ENCODE measurements at regions of chr4 and their contacts with region 1.

Region 1: GRCh38 chr4:121072224-121073003 is at the start of gene NDNF:
- DNase-seq: peak; percentile 70
- H3K4me3 Mint-ChIP-seq: peak within 1 kb of the TSS; percentile 77
- H3K27ac Mint-ChIP-seq: peak within 1 kb of the TSS; percentile 59
- H3K4me1 Mint-ChIP-seq: peaks cover 21% of the 10 kb centered on the region
- H3K27me3 Mint-ChIP-seq: peaks cover 44% of the 10 kb centered on the region
- total RNA-seq, gene NDNF: not detected

Region 2: DNA sequence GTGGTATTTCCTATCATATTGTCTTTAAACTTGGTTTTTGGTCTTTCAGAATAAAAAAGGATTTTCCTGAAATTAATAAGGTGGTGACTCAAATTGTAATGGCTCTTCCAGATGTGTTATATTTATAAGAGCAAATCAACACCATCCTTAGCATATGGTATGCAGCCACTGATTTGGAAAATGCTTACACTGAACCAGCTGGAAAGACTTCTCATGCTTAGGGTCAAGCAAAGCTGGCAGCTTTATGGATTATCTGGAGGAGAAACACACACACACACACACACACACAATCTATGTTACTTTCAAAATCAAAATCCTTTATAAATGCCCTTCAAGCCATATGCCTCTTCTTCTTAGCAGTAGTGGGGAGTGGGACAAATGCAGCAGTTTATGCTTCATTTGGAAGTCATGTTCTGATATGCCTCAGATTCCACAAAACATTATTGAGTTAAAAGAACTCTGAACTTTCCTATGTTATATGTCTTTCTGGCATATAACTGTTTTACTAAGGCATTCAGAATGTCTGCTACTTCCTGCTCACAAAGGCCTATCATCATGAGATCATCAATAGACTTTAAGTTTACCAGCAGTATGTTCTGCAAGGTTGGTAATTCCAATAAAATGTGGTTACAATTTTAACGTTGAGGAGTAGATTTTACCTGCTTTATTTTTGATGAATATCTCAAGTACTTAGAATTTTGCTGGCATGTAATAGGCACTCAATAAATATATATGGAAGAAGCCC is 77.0 kb before region 1 on chr4:
- CTCF ChIA-PET with region 1: no interaction called
- intact Hi-C with region 1: no loop called
- DNase-seq: no peak
- H3K4me3 Mint-ChIP-seq: no peak overlapping the region
- H3K27ac Mint-ChIP-seq: no peak overlapping the region
- H3K4me1 Mint-ChIP-seq: peaks cover 4% of the 10 kb centered on the region
- H3K27me3 Mint-ChIP-seq: no peaks in the 10 kb centered on the region

Region 3: DNA sequence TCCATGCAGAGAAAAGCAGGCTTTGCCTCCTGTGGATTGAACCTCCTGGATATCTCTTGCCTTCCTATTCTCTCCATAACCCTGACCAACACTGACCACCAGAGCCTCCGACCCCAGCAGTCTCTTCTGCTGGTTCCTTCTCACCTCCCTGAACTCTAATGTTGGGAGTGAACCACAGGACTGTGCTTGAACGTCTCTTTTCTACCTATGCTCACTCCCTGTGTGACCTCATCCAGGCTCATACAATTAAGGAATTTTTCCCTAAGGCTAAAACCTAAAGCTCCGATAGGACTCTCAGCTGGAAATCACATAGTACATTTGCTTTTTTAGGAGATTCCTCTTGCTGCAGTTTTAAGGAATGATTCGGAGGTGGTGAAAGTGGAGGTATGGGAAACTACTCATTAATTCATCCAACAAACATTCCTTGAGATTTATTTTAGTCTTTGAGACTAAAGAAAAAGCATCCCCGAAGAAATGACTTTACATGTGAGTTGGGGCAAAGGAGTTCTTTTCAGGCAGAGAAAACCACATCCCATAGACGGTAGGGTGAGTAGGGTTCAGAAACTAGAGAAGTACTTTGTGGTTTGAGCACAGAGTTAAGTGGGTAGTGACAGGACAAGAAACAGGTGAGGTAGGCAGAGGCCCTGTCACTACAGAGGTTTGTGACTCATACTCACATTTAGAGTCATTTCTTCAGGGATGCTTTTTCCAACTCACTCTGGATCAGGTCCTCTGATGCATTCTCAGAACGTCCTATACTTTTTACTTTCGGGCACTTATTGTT is 30.9 kb before region 1 on chr4:
- CTCF ChIA-PET with region 1: no interaction called
- intact Hi-C with region 1: loop called (anchors 1 kb)
- DNase-seq: peak; percentile 53
- H3K4me3 Mint-ChIP-seq: no peak overlapping the region
- H3K27ac Mint-ChIP-seq: no peak overlapping the region
- H3K4me1 Mint-ChIP-seq: peaks cover 13% of the 10 kb centered on the region
- H3K27me3 Mint-ChIP-seq: no peaks in the 10 kb centered on the region

Region 4: GRCh38 chr4:121192480-121192879 is 120.1 kb after region 1 on chr4:
- CTCF ChIA-PET with region 1: no interaction called
- intact Hi-C with region 1: no loop called
- DNase-seq: peak; percentile 37
- H3K4me3 Mint-ChIP-seq: peak overlapping the region; percentile 9
- H3K27ac Mint-ChIP-seq: no peak overlapping the region
- H3K4me1 Mint-ChIP-seq: peaks cover 44% of the 10 kb centered on the region
- H3K27me3 Mint-ChIP-seq: no peaks in the 10 kb centered on the region

Measured in activated naive CD4-positive, alpha-beta T cell treated with anti-CD3 and anti-CD28 coated beads for 36 hours (primary cell).